ENCODE measurements at regions of chr4 and their contacts with region 1.

Region 1: DNA sequence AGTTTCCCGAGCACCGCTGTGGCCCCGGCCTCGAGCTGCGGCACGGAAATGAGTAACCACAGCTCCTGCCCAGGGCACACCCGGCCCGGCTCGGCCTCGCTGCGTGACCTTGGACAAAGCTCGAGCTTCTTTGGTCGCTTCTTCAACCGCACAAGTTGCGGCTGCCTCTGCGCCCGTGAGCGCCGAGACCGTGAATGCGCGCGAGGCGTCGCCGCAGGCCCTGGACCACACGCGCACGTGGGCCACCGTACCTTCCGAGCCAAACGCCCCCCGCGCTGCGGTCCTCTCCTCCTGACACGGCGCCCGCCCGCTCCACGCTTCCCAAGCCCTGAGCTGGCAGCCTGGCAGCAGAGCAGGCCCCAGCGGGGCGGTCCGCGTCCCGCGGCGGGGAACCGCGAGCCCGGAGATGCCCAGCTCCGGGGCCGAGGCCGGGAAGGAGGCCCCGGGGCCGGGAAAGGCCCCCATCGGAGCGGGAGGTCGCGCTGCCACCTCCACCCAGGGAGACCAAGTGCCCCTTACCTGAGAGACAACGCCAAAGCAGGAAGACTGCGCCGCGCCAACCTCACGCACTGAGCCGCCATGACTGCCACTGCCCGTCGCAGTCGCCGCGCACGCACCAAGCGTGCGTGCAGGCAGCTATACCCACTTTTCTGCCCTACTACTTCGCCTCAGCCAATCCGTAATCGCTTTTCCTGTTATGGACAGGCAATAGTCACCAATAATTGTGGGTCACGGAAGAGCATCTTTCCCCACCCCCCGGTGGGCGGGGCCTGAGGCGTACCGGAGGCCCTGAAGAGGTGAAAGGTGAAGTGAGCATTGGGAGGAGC is at the start of gene GRPEL1:
- DNase-seq: peak; percentile 100
- ATAC-seq: peak; percentile 96
- H3K4me3 Mint-ChIP-seq: peak within 1 kb of the TSS; percentile 97
- H3K27ac Mint-ChIP-seq: peak within 1 kb of the TSS; percentile 92
- H3K4me1 Mint-ChIP-seq: peaks cover 39% of the 10 kb centered on the region
- H3K27me3 Mint-ChIP-seq: peaks cover 12% of the 10 kb centered on the region
- total RNA-seq, gene GRPEL1: 43.1 to 49.4 TPM

Region 2: GRCh38 chr4:6716018-6716911 is 351.4 kb before region 1 on chr4 and contains the start of gene BLOC1S4:
- CTCF ChIA-PET with region 1: interaction called, 11 read pairs
- POLR2A ChIA-PET with region 1: interaction called, 9 read pairs
- DNase-seq: peak; percentile 92
- ATAC-seq: peak; percentile 83
- H3K4me3 Mint-ChIP-seq: peak within 1 kb of the TSS; percentile 91
- H3K27ac Mint-ChIP-seq: peak within 1 kb of the TSS; percentile 97
- H3K4me1 Mint-ChIP-seq: peaks cover 35% of the 10 kb centered on the region
- H3K27me3 Mint-ChIP-seq: no peaks in the 10 kb centered on the region
- total RNA-seq, gene BLOC1S4: 19.6 to 21.5 TPM

Region 3: GRCh38 chr4:6974138-6974848 is 93.4 kb before region 1 on chr4:
- CTCF ChIA-PET with region 1: interaction called, 19 read pairs
- POLR2A ChIA-PET with region 1: interaction called, 3 read pairs
- DNase-seq: peak; percentile 87
- ATAC-seq: peak; percentile 90
- H3K4me3 Mint-ChIP-seq: no peak overlapping the region
- H3K27ac Mint-ChIP-seq: no peak overlapping the region
- H3K4me1 Mint-ChIP-seq: peaks cover 10% of the 10 kb centered on the region
- H3K27me3 Mint-ChIP-seq: no peaks in the 10 kb centered on the region

Region 4: GRCh38 chr4:7042697-7043464 is 24.8 kb before region 1 on chr4 and contains the start of gene TADA2B:
- CTCF ChIA-PET with region 1: interaction called, 172 read pairs
- POLR2A ChIA-PET with region 1: interaction called, 62 read pairs
- DNase-seq: peak; percentile 93
- ATAC-seq: peak; percentile 89
- H3K4me3 Mint-ChIP-seq: peak within 1 kb of the TSS; percentile 93
- H3K27ac Mint-ChIP-seq: peak within 1 kb of the TSS; percentile 87
- H3K4me1 Mint-ChIP-seq: peaks cover 44% of the 10 kb centered on the region
- H3K27me3 Mint-ChIP-seq: peaks cover 14% of the 10 kb centered on the region
- total RNA-seq, gene TADA2B: 16.6 to 16.8 TPM

Region 5: GRCh38 chr4:7101692-7102515 is 34.2 kb after region 1 on chr4:
- CTCF ChIA-PET with region 1: interaction called, 27 read pairs
- POLR2A ChIA-PET with region 1: interaction called, 7 read pairs
- DNase-seq: peak; percentile 68
- ATAC-seq: peak; percentile 61
- H3K4me3 Mint-ChIP-seq: peak overlapping the region; percentile 79
- H3K27ac Mint-ChIP-seq: no peak overlapping the region
- H3K4me1 Mint-ChIP-seq: peaks cover 18% of the 10 kb centered on the region
- H3K27me3 Mint-ChIP-seq: peaks cover 12% of the 10 kb centered on the region